ENCODE measurements at regions of chr13 and their contacts with region 1.

Region 1: DNA sequence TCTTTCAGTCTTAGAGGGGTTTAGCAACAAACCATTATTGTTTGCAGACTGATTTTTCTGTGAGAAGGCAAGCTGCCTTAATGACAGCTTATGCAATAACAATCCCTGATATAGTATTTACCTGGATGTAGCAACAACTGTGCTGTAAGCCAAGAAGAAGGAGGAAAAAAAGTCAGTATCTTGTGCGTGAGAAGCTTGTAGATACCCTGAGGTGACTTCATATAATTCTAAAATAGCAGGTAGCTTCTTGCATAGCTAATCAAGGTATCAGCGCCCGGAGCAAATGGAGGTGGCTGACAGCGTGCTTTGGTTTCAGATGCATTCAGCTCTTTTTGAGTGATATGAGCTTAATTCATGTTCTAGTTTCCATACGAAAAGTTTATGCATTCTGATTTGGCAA is 309.8 kb downstream of the KLF5 start:
- DNase-seq: peak; percentile 87
- H3K4me3 ChIP-seq: no peak overlapping the region
- H3K27ac ChIP-seq: peak overlapping the region; percentile 78
- H3K4me1 ChIP-seq: peaks cover 31% of the 10 kb centered on the region
- H3K27me3 ChIP-seq: no peaks in the 10 kb centered on the region
- CTCF ChIP-seq: no peak

Region 2: GRCh38 chr13:73411067-73411809 is 42.6 kb after region 1 on chr13:
- CTCF ChIA-PET with region 1: no interaction called
- dilution Hi-C with region 1: no loop called
- in situ Hi-C with region 1: no loop called
- intact Hi-C with region 1: loop called (anchors 1 kb)
- DNase-seq: peak; percentile 90
- H3K4me3 ChIP-seq: no peak overlapping the region
- H3K27ac ChIP-seq: peak overlapping the region; percentile 85
- H3K4me1 ChIP-seq: peaks cover 33% of the 10 kb centered on the region
- H3K27me3 ChIP-seq: no peaks in the 10 kb centered on the region
- CTCF ChIP-seq: no peak

Region 3: GRCh38 chr13:73465617-73465971 is 97.0 kb after region 1 on chr13:
- CTCF ChIA-PET with region 1: no interaction called
- dilution Hi-C with region 1: no loop called
- in situ Hi-C with region 1: no loop called
- intact Hi-C with region 1: no loop called
- DNase-seq: peak; percentile 96
- H3K4me3 ChIP-seq: no peak overlapping the region
- H3K27ac ChIP-seq: peak overlapping the region; percentile 94
- H3K4me1 ChIP-seq: peaks cover 31% of the 10 kb centered on the region
- H3K27me3 ChIP-seq: no peaks in the 10 kb centered on the region
- CTCF ChIP-seq: peak; percentile 11 to 34

Measured in mammary epithelial cell (primary cell).